Transverse colon (tissue), 4 donors: ENCODE measurements at regions of chr12 and their contacts with region 1.

Region 1: GRCh38 chr12:65306366-65307168 is 28.1 kb downstream of the MSRB3 start:
- DNase-seq: peak; percentile 48
- H3K4me3 ChIP-seq: no peak overlapping the region
- H3K27ac ChIP-seq: peak overlapping the region in 3 of 4 donors; percentile 26 to 51 (median 40)
- H3K4me1 ChIP-seq: peaks cover 0 to 22% (median 9%) of the 10 kb centered on the region in 4 donors
- H3K27me3 ChIP-seq: no peaks in the 10 kb centered on the region
- CTCF ChIP-seq: peak; percentile 27 to 51 (median 45)
- EP300 ChIP-seq: no peak
- POLR2A ChIP-seq: no peak

Region 2: GRCh38 chr12:65384240-65384639 is 77.7 kb after region 1 on chr12:
- in situ Hi-C with region 1: no loop called
- intact Hi-C with region 1: no loop called
- DNase-seq: no peak
- H3K4me3 ChIP-seq: no peak overlapping the region
- H3K27ac ChIP-seq: no peak overlapping the region
- H3K4me1 ChIP-seq: no peaks in the 10 kb centered on the region
- H3K27me3 ChIP-seq: no peaks in the 10 kb centered on the region
- CTCF ChIP-seq: no peak
- EP300 ChIP-seq: no peak
- POLR2A ChIP-seq: no peak

Region 3: DNA sequence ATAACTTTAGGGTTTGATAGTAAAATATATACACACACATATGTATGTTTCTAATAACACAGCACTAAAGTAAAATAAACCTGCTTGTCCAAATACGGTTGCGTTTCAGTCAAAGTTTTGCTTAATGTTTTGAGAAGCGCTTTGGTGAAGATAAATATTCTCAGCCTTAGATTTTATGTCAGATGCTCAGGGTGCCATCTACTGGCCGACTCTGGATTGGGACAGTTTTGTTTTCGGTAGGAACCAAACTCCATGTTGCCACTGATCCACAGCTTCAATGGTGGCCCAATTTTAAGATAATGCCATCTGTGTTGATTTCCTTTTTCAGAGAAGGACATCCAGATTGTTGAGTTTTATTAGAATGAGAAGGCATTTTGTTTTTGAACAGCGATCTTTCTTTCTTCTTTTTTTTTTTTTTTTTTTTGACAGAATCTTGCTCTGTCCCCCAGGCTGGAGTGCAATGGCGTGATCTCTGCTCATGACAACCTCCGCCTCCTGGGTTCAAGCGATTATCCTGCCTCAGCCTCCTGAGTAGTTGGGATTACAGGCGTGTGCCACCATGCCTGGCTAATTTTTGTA is 780.9 kb after region 1 on chr12:
- in situ Hi-C with region 1: loop called in 2 of 4 experiments (anchors 25 kb)
- intact Hi-C with region 1: no loop called
- DNase-seq: peak; percentile 62
- H3K4me3 ChIP-seq: no peak overlapping the region
- H3K27ac ChIP-seq: no peak overlapping the region
- H3K4me1 ChIP-seq: no peaks in the 10 kb centered on the region
- H3K27me3 ChIP-seq: no peaks in the 10 kb centered on the region
- CTCF ChIP-seq: peak; percentile 59 to 69 (median 61)
- EP300 ChIP-seq: no peak
- POLR2A ChIP-seq: no peak

Region 4: DNA sequence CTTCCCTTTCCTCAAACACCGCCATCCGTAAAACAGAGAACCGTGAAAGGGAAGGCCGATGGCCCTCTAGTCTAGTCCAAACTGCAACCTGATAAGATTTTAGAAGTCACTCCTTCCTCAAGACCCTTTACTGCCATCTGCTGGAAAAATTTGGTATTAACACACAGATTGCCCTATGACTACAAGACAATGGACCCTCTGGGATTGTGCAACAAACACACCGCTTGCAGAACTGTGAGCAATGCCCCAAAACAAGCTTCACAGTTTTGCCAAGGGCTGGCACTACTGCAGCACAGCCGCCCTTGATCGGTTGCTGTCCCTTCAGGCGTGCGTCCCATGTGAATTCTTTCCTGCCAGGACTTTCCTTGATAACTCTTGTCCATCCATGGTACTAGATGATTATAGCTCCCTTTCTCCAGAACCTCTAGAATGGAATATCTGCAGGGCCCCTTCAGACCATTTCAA is 800.9 kb after region 1 on chr12:
- in situ Hi-C with region 1: loop called in 1 of 4 experiments (anchors 10 kb)
- intact Hi-C with region 1: no loop called
- DNase-seq: peak; percentile 35
- H3K4me3 ChIP-seq: no peak overlapping the region
- H3K27ac ChIP-seq: no peak overlapping the region
- H3K4me1 ChIP-seq: no peaks in the 10 kb centered on the region
- H3K27me3 ChIP-seq: no peaks in the 10 kb centered on the region
- CTCF ChIP-seq: peak; percentile 70 to 83 (median 77)
- EP300 ChIP-seq: no peak
- POLR2A ChIP-seq: no peak